Caco-2 (cell line): ENCODE measurements at regions of chr12 and their contacts with region 1.

Region 1: DNA sequence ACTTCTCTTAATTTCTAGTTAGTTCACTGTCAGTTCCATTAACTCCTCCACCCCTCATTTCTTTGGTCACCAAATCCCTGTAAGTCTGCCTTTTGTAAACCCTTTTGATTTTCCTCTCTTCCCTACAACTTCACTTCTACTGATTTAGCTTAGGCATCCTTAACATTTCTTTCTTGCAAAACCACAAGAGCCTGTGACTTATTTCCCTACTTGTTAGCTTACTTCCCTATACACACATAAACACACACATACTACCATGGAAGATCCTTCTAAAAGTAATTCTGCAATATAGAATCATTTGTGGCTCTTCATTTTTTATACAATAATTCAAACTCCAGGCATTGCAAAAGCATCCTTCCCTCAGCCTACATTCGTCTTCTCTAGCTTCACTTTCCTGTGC is 494.3 kb upstream of the USP15 start:
- DNase-seq: no peak
- H3K4me3 ChIP-seq: no peak overlapping the region
- H3K4me3 Mint-ChIP-seq: no peak overlapping the region
- H3K27ac Mint-ChIP-seq: no peak overlapping the region
- H3K4me1 ChIP-seq: no peaks in the 10 kb centered on the region
- H3K4me1 Mint-ChIP-seq: no peaks in the 10 kb centered on the region
- H3K27me3 ChIP-seq: no peaks in the 10 kb centered on the region
- H3K27me3 Mint-ChIP-seq: peaks cover 4% of the 10 kb centered on the region
- CTCF ChIP-seq: no peak

Region 2: GRCh38 chr12:61676520-61676919 is 89.4 kb before region 1 on chr12:
- CTCF ChIA-PET with region 1: no interaction called
- POLR2A ChIA-PET with region 1: no interaction called
- intact Hi-C with region 1: no loop called
- DNase-seq: no peak
- H3K4me3 ChIP-seq: no peak overlapping the region
- H3K4me3 Mint-ChIP-seq: no peak overlapping the region
- H3K27ac Mint-ChIP-seq: no peak overlapping the region
- H3K4me1 ChIP-seq: no peaks in the 10 kb centered on the region
- H3K4me1 Mint-ChIP-seq: no peaks in the 10 kb centered on the region
- H3K27me3 ChIP-seq: no peaks in the 10 kb centered on the region
- H3K27me3 Mint-ChIP-seq: no peaks in the 10 kb centered on the region
- CTCF ChIP-seq: no peak

Region 3: GRCh38 chr12:61713121-61713520 is 52.8 kb before region 1 on chr12:
- CTCF ChIA-PET with region 1: no interaction called
- POLR2A ChIA-PET with region 1: no interaction called
- intact Hi-C with region 1: no loop called
- DNase-seq: no peak
- H3K4me3 ChIP-seq: no peak overlapping the region
- H3K4me3 Mint-ChIP-seq: no peak overlapping the region
- H3K27ac Mint-ChIP-seq: no peak overlapping the region
- H3K4me1 ChIP-seq: no peaks in the 10 kb centered on the region
- H3K4me1 Mint-ChIP-seq: no peaks in the 10 kb centered on the region
- H3K27me3 ChIP-seq: no peaks in the 10 kb centered on the region
- H3K27me3 Mint-ChIP-seq: no peaks in the 10 kb centered on the region
- CTCF ChIP-seq: no peak

Region 4: DNA sequence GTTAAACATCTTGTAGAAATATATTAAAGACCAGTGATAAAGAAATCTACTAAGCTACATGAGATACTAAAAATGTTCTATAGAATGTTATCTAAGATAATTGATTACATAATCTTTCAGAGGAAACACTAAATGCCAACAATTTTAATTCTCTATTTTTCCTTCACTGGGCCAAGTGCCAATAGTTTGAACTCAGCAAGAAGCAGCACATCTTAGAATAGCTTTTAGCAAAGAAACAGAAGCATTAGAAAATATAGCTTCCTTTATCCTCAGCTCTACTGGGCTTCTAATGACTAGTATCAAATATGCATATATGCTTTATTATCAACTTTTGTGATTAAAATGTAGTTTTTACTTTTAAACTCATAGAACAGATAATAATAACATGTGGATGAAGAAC is 32.9 kb after region 1 on chr12:
- CTCF ChIA-PET with region 1: no interaction called
- POLR2A ChIA-PET with region 1: no interaction called
- intact Hi-C with region 1: loop called (anchors 1 kb)
- DNase-seq: no peak
- H3K4me3 ChIP-seq: no peak overlapping the region
- H3K4me3 Mint-ChIP-seq: no peak overlapping the region
- H3K27ac Mint-ChIP-seq: no peak overlapping the region
- H3K4me1 ChIP-seq: no peaks in the 10 kb centered on the region
- H3K4me1 Mint-ChIP-seq: no peaks in the 10 kb centered on the region
- H3K27me3 ChIP-seq: no peaks in the 10 kb centered on the region
- H3K27me3 Mint-ChIP-seq: no peaks in the 10 kb centered on the region
- CTCF ChIP-seq: no peak